ENCODE measurements at regions of chr4 and their contacts with region 1.

Region 1: GRCh38 chr4:108060164-108060563 is 70.5 kb downstream of the HADH start:
- DNase-seq: peak in 2 of 9 experiments; percentile 33 to 51
- ATAC-seq: no peak
- H3K4me3 ChIP-seq: no peak overlapping the region
- H3K4me3 Mint-ChIP-seq: no peak overlapping the region
- H3K27ac ChIP-seq: no peak overlapping the region
- H3K27ac Mint-ChIP-seq: peak overlapping the region; percentile 81
- H3K4me1 ChIP-seq: peaks cover 92% of the 10 kb centered on the region
- H3K4me1 Mint-ChIP-seq: peaks cover 87% of the 10 kb centered on the region
- H3K27me3 ChIP-seq: no peaks in the 10 kb centered on the region
- H3K27me3 Mint-ChIP-seq: no peaks in the 10 kb centered on the region
- CTCF ChIP-seq: no peak

Region 2: DNA sequence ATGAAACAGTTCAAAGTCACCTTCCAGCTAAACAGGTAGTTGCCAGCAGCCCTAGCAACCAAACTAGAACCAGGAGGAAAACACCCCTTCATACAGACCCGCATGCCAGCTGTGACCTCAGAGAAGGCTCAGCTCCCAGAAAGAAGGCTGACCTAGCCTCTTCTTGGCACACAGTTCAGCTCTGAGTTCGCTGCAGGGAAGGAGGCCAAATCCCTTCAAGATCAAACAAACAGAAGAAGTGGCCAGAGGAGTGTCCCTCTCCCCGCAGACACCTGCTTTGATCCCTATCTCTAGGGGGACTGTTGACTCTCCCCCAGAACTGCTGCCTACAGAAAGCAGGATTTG is 14.5 kb before region 1 on chr4:
- CTCF ChIA-PET with region 1: interaction called, 3 read pairs
- POLR2A ChIA-PET with region 1: interaction called, 16 read pairs
- intact Hi-C with region 1: loop called in 1 of 2 experiments (anchors 1 kb)
- DNase-seq: peak in 3 of 9 experiments; percentile 36 to 69 (median 50)
- ATAC-seq: peak; percentile 27
- H3K4me3 ChIP-seq: no peak overlapping the region
- H3K4me3 Mint-ChIP-seq: no peak overlapping the region
- H3K27ac ChIP-seq: peak overlapping the region; percentile 16 to 17
- H3K27ac Mint-ChIP-seq: peak overlapping the region; percentile 81
- H3K4me1 ChIP-seq: peaks cover 69% of the 10 kb centered on the region
- H3K4me1 Mint-ChIP-seq: peaks cover 66% of the 10 kb centered on the region
- H3K27me3 ChIP-seq: no peaks in the 10 kb centered on the region
- H3K27me3 Mint-ChIP-seq: no peaks in the 10 kb centered on the region
- CTCF ChIP-seq: no peak